T-cell (primary cell): ENCODE measurements at regions of chr10 and their contacts with region 1.

Region 1: GRCh38 chr10:10942441-10942840 is 75.2 kb upstream of the CELF2 start:
- DNase-seq: no peak
- ATAC-seq: no peak
- H3K4me3 ChIP-seq: no peak overlapping the region
- H3K4me3 Mint-ChIP-seq: no peak overlapping the region
- H3K27ac ChIP-seq: no peak overlapping the region
- H3K27ac Mint-ChIP-seq: no peak overlapping the region
- H3K4me1 ChIP-seq: no peaks in the 10 kb centered on the region
- H3K4me1 Mint-ChIP-seq: no peaks in the 10 kb centered on the region
- H3K27me3 ChIP-seq: peaks cover 0 to 15% of the 10 kb centered on the region in 2 experiments
- H3K27me3 Mint-ChIP-seq: peaks cover 15 to 27% of the 10 kb centered on the region in 2 donors

Region 2: GRCh38 chr10:10792681-10793080 is 149.8 kb before region 1 on chr10:
- CTCF ChIA-PET with region 1: no interaction called
- POLR2A ChIA-PET with region 1: no interaction called
- DNase-seq: no peak
- ATAC-seq: no peak
- H3K4me3 ChIP-seq: no peak overlapping the region
- H3K4me3 Mint-ChIP-seq: no peak overlapping the region
- H3K27ac ChIP-seq: no peak overlapping the region
- H3K27ac Mint-ChIP-seq: no peak overlapping the region
- H3K4me1 ChIP-seq: no peaks in the 10 kb centered on the region
- H3K4me1 Mint-ChIP-seq: no peaks in the 10 kb centered on the region
- H3K27me3 ChIP-seq: peaks cover 0 to 4% of the 10 kb centered on the region in 2 experiments
- H3K27me3 Mint-ChIP-seq: peaks cover 28 to 40% of the 10 kb centered on the region in 2 donors

Region 3: GRCh38 chr10:10923029-10923651 is 19.3 kb before region 1 on chr10:
- CTCF ChIA-PET with region 1: no interaction called
- POLR2A ChIA-PET with region 1: no interaction called
- DNase-seq: no peak
- ATAC-seq: no peak
- H3K4me3 ChIP-seq: no peak overlapping the region
- H3K4me3 Mint-ChIP-seq: no peak overlapping the region
- H3K27ac ChIP-seq: no peak overlapping the region
- H3K27ac Mint-ChIP-seq: no peak overlapping the region
- H3K4me1 ChIP-seq: no peaks in the 10 kb centered on the region
- H3K4me1 Mint-ChIP-seq: no peaks in the 10 kb centered on the region
- H3K27me3 ChIP-seq: peaks cover 0 to 7% of the 10 kb centered on the region in 2 experiments
- H3K27me3 Mint-ChIP-seq: peaks cover 17 to 22% of the 10 kb centered on the region in 2 donors

Region 4: DNA sequence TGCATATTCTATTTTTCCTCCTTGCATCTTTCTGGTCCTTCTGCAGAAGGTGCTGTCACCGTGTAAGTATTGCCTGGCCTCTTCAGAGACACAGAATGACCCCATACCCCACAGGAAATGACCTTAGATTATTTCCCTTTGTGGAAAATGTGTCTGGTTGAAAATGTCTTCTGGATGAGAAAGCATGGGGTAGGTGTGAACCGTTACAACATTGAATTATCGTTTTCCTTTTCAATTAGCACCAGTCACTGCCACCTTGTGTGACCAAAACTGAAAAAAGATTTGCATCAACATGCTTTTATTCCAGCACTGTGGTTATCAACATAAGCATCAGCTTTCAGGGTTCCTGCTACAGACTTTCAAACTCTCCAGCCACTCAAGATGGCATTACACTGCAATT is 17.2 kb after region 1 on chr10:
- CTCF ChIA-PET with region 1: no interaction called
- POLR2A ChIA-PET with region 1: no interaction called
- DNase-seq: no peak
- ATAC-seq: no peak
- H3K4me3 ChIP-seq: no peak overlapping the region
- H3K4me3 Mint-ChIP-seq: no peak overlapping the region
- H3K27ac ChIP-seq: no peak overlapping the region
- H3K27ac Mint-ChIP-seq: no peak overlapping the region
- H3K4me1 ChIP-seq: no peaks in the 10 kb centered on the region
- H3K4me1 Mint-ChIP-seq: no peaks in the 10 kb centered on the region
- H3K27me3 ChIP-seq: peaks cover 0 to 7% of the 10 kb centered on the region in 2 experiments
- H3K27me3 Mint-ChIP-seq: peaks cover 8 to 9% of the 10 kb centered on the region in 2 donors

Region 5: GRCh38 chr10:10977978-10978377 is 35.5 kb after region 1 on chr10:
- CTCF ChIA-PET with region 1: no interaction called
- POLR2A ChIA-PET with region 1: interaction called in 1 of 2 experiments, 15 read pairs
- DNase-seq: no peak
- ATAC-seq: no peak
- H3K4me3 ChIP-seq: no peak overlapping the region
- H3K4me3 Mint-ChIP-seq: no peak overlapping the region
- H3K27ac ChIP-seq: no peak overlapping the region
- H3K27ac Mint-ChIP-seq: no peak overlapping the region
- H3K4me1 ChIP-seq: no peaks in the 10 kb centered on the region
- H3K4me1 Mint-ChIP-seq: no peaks in the 10 kb centered on the region
- H3K27me3 ChIP-seq: peaks cover 0 to 14% of the 10 kb centered on the region in 2 experiments
- H3K27me3 Mint-ChIP-seq: peaks cover 19% of the 10 kb centered on the region in 2 donors

Region 6: DNA sequence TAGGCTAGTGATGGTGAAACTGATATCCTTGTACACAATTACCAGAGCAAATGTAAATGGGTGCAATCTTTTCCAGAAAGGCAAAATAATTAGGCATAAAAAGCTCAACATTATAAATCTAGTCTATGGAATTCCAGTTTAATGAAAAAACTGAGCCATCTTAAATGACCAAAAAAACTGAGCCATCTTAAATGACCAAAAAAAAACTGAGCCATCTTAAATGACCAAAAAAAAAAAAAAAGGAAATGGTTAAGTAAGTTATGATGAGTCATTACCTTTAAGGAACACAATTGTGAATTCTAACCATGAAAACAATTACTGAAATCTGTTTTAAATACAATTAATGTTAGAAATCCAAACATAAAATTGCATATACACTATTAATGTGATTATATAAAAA is 643.7 kb after region 1 on chr10:
- CTCF ChIA-PET with region 1: no interaction called
- POLR2A ChIA-PET with region 1: no interaction called
- DNase-seq: no peak
- ATAC-seq: no peak
- H3K4me3 ChIP-seq: no peak overlapping the region
- H3K4me3 Mint-ChIP-seq: no peak overlapping the region
- H3K27ac ChIP-seq: no peak overlapping the region
- H3K27ac Mint-ChIP-seq: no peak overlapping the region
- H3K4me1 ChIP-seq: no peaks in the 10 kb centered on the region
- H3K4me1 Mint-ChIP-seq: peaks cover 11 to 25% (median 19%) of the 10 kb centered on the region in 3 donors
- H3K27me3 ChIP-seq: no peaks in the 10 kb centered on the region
- H3K27me3 Mint-ChIP-seq: peaks cover 0 to 1% of the 10 kb centered on the region in 2 donors